CD8-positive, alpha-beta T cell (primary cell): ENCODE measurements at regions of chr11 and their contacts with region 1.

Region 1: GRCh38 chr11:6682936-6683861 is at the start of gene MRPL17:
- DNase-seq: peak; percentile 97 to 100 (median 99)
- ATAC-seq: peak; percentile 95
- H3K4me3 ChIP-seq: peak within 1 kb of the TSS; percentile 87 to 94
- H3K4me3 Mint-ChIP-seq: peak within 1 kb of the TSS; percentile 99
- H3K27ac ChIP-seq: peak within 1 kb of the TSS; percentile 81 to 84
- H3K27ac Mint-ChIP-seq: peak within 1 kb of the TSS; percentile 99
- H3K4me1 ChIP-seq: peaks cover 20% of the 10 kb centered on the region
- H3K4me1 Mint-ChIP-seq: peaks cover 38% of the 10 kb centered on the region
- H3K27me3 ChIP-seq: no peaks in the 10 kb centered on the region
- H3K27me3 Mint-ChIP-seq: no peaks in the 10 kb centered on the region
- CTCF ChIP-seq: peak; percentile 87
- total RNA-seq, gene MRPL17: 11.2 to 12.0 TPM

Region 2: DNA sequence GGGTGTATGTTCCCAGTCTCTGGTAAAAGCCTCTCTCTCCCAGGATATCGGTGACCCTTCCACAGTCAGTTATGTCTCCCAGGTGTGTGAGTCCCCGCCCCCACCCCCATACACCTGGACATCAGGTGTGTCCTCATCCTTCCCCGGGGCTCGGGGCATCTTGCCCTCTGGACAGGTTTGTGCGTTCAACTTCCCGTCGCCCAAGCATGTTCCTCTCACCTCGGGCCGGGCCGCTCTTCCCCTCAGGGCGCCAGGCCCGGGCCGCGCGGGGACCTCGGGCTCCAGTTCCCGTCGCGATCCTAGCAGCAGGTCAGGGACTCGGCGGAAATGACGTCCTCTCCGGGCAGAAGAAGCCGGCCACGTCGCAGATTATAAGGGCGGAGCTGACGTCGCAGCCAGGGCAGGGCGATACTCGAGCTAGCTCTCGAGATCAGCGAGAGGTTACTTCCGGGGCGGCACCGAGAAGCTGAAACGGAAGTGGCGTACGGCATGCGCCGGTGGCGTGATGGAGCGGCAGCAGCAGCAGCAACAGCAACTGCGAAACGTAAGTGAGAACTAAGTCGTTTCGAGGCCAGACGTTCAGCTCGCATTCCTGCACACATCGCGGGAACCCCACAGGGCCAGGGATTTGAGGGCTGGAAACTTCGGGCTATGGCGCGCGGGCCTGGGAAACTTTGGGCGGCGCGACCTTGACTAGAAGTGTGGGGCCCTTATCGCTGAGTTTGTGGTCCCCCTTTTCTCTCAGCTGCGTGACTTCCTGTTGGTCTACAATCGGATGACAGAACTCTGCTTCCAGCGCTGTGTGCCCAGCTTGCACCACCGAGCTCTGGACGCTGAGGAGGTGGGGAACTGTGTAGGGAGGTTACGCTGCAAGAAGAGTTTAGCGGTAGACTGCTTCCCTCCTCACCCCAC is 201.9 kb before region 1 on chr11 and contains the starts of genes ARFIP2 and TIMM10B:
- CTCF ChIA-PET with region 1: interaction called, 4 read pairs
- POLR2A ChIA-PET with region 1: interaction called, 10 read pairs
- intact Hi-C with region 1: loop called (anchors 1 to 5 kb)
- DNase-seq: peak; percentile 92 to 99 (median 96)
- ATAC-seq: peak; percentile 95
- H3K4me3 ChIP-seq: peak within 1 kb of the TSS; percentile 76 to 87
- H3K4me3 Mint-ChIP-seq: peak within 1 kb of the TSS; percentile 96
- H3K27ac ChIP-seq: peak within 1 kb of the TSS; percentile 87 to 98
- H3K27ac Mint-ChIP-seq: peak within 1 kb of the TSS; percentile 99
- H3K4me1 ChIP-seq: peaks cover 32% of the 10 kb centered on the region
- H3K4me1 Mint-ChIP-seq: peaks cover 40% of the 10 kb centered on the region
- H3K27me3 ChIP-seq: no peaks in the 10 kb centered on the region
- H3K27me3 Mint-ChIP-seq: no peaks in the 10 kb centered on the region
- CTCF ChIP-seq: no peak
- total RNA-seq, gene ARFIP2: 76.5 to 89.7 TPM
- total RNA-seq, gene TIMM10B: 68.6 to 73.0 TPM

Region 3: DNA sequence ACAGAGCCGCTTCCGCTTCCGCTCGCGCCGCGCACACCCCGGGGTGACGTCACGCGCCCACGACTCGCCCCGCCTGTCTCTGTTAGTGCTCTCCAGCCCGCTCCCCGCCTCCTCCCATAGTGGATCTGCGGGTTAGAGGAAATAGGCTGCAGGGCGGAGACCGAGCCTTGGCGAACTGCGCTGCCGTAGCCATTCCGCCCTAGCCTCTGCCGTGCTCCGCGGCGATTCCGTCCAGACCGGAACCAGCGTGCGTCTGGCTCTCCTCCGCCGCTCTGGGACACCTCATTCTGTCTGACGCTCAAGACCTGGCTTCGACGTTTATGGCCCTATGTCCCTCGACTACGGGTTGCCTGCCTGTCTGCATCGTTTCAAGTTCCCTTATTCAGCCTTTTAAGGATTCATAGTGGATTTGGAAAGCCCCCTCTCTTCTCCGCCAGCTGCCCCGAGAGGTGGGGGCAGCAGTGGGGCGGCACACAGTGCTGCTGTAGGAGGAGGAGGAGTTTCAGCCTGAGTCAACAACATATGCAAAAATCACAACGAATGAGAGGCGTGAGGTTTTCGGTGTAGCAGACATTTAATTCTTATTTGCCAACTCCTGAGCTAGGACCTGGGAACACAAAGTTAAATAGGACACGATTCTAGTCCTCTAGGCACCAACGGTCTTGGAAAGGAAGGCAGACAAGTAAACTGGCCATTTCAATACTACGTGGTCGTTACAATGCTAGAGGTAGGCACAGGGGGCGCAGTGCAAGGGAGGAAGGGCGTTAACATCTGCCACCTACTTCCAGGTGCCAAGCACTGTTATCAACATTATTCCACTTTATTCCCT is 70.8 kb before region 1 on chr11 and contains the start of gene TAF10:
- CTCF ChIA-PET with region 1: interaction called, 67 read pairs
- POLR2A ChIA-PET with region 1: interaction called, 97 read pairs
- intact Hi-C with region 1: loop called (anchors 1 to 2 kb)
- DNase-seq: peak; percentile 85 to 98 (median 97)
- ATAC-seq: peak; percentile 89
- H3K4me3 ChIP-seq: peak within 1 kb of the TSS; percentile 78 to 79
- H3K4me3 Mint-ChIP-seq: peak within 1 kb of the TSS; percentile 92
- H3K27ac ChIP-seq: peak within 1 kb of the TSS; percentile 96 to 98
- H3K27ac Mint-ChIP-seq: peak within 1 kb of the TSS; percentile 95
- H3K4me1 ChIP-seq: peaks cover 33% of the 10 kb centered on the region
- H3K4me1 Mint-ChIP-seq: peaks cover 46% of the 10 kb centered on the region
- H3K27me3 ChIP-seq: no peaks in the 10 kb centered on the region
- H3K27me3 Mint-ChIP-seq: no peaks in the 10 kb centered on the region
- CTCF ChIP-seq: peak; percentile 49
- total RNA-seq, gene TAF10: 158 to 161 TPM

Region 4: DNA sequence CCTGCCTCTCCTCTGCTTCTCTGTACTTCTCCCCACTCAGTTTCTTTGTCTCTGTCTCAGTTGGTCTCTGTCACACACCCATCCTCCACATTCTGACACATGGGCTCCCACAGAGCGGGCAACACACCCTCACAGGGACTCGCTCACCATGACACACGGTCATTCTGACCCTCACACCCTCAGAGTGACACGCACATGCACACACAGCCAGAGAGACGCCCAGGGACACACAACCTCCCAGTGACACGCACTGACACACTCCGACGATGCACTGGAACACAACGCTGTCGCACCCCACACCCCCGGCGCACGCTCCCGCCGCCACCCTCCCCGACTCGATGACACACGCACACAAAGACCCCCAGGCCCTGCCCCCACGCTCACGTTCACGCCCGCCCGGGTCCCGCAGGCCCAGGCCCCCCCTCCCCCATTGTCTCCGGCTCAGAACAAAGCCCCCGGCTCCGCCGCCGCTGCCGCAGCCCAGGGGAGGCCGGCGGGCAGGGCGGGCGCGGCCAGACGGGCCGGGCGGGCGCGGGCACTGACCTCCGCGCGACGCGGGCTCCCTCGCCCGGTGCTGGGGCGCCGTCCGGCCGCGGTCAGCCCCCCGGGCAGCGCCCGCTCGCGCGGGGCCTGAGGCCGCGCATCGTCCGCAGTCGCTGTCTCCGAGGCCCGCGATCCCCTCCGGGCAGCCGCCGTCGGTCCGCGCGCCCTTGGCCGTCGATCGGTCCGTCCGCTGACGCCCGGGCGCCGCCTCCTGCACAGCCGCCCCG is 28.0 kb before region 1 on chr11:
- CTCF ChIA-PET with region 1: interaction called, 5 read pairs
- POLR2A ChIA-PET with region 1: interaction called, 9 read pairs
- intact Hi-C with region 1: loop called in 1 of 2 experiments (anchors 1 kb)
- DNase-seq: peak in 7 of 9 experiments; percentile 11 to 62 (median 52)
- ATAC-seq: peak; percentile 58
- H3K4me3 ChIP-seq: peak overlapping the region; percentile 42 to 43
- H3K4me3 Mint-ChIP-seq: no peak overlapping the region
- H3K27ac ChIP-seq: peak overlapping the region; percentile 6 to 44
- H3K27ac Mint-ChIP-seq: no peak overlapping the region
- H3K4me1 ChIP-seq: peaks cover 36% of the 10 kb centered on the region
- H3K4me1 Mint-ChIP-seq: peaks cover 12% of the 10 kb centered on the region
- H3K27me3 ChIP-seq: no peaks in the 10 kb centered on the region
- H3K27me3 Mint-ChIP-seq: no peaks in the 10 kb centered on the region
- CTCF ChIP-seq: no peak

Region 5: GRCh38 chr11:6705905-6706535 is 22.8 kb after region 1 on chr11:
- CTCF ChIA-PET with region 1: interaction called, 23 read pairs
- POLR2A ChIA-PET with region 1: interaction called, 3 read pairs
- intact Hi-C with region 1: no loop called
- DNase-seq: peak in 4 of 9 experiments; percentile 45 to 69 (median 52)
- ATAC-seq: peak; percentile 83
- H3K4me3 ChIP-seq: no peak overlapping the region
- H3K4me3 Mint-ChIP-seq: no peak overlapping the region
- H3K27ac ChIP-seq: peak overlapping the region in 1 of 2 experiments; percentile 1
- H3K27ac Mint-ChIP-seq: peak overlapping the region; percentile 80
- H3K4me1 ChIP-seq: no peaks in the 10 kb centered on the region
- H3K4me1 Mint-ChIP-seq: peaks cover 25% of the 10 kb centered on the region
- H3K27me3 ChIP-seq: no peaks in the 10 kb centered on the region
- H3K27me3 Mint-ChIP-seq: no peaks in the 10 kb centered on the region
- CTCF ChIP-seq: peak; percentile 90

Region 6: GRCh38 chr11:8688414-8689362 is 2005.5 kb after region 1 on chr11:
- CTCF ChIA-PET with region 1: no interaction called
- POLR2A ChIA-PET with region 1: no interaction called
- intact Hi-C with region 1: loop called in 1 of 2 experiments (anchors 10 kb)
- DNase-seq: peak; percentile 51 to 90 (median 80)
- ATAC-seq: peak; percentile 78
- H3K4me3 ChIP-seq: peak overlapping the region; percentile 78 to 79
- H3K4me3 Mint-ChIP-seq: peak overlapping the region; percentile 93
- H3K27ac ChIP-seq: peak overlapping the region; percentile 71 to 83
- H3K27ac Mint-ChIP-seq: peak overlapping the region; percentile 93
- H3K4me1 ChIP-seq: peaks cover 29% of the 10 kb centered on the region
- H3K4me1 Mint-ChIP-seq: peaks cover 41% of the 10 kb centered on the region
- H3K27me3 ChIP-seq: no peaks in the 10 kb centered on the region
- H3K27me3 Mint-ChIP-seq: no peaks in the 10 kb centered on the region
- CTCF ChIP-seq: no peak